ENCODE measurements at regions of chr11 and their contacts with region 1.

Region 1: GRCh38 chr11:43779306-43779705 is 98.8 kb downstream of the HSD17B12 start:
- DNase-seq: no peak
- ATAC-seq: no peak
- H3K4me3 ChIP-seq: no peak overlapping the region
- H3K27ac ChIP-seq: no peak overlapping the region
- H3K4me1 ChIP-seq: no peaks in the 10 kb centered on the region
- H3K27me3 ChIP-seq: no peaks in the 10 kb centered on the region
- CTCF ChIP-seq: no peak

Region 2: GRCh38 chr11:43680521-43681400 is 98.5 kb before region 1 on chr11 and contains the start of gene HSD17B12:
- intact Hi-C with region 1: loop called in 1 of 2 experiments (anchors 10 kb)
- DNase-seq: peak; percentile 95 to 100 (median 99)
- ATAC-seq: peak; percentile 99
- H3K4me3 ChIP-seq: peak within 1 kb of the TSS; percentile 84 to 88
- H3K27ac ChIP-seq: peak within 1 kb of the TSS; percentile 95 to 96
- H3K4me1 ChIP-seq: peaks cover 5 to 54% of the 10 kb centered on the region in 2 donors
- H3K27me3 ChIP-seq: no peaks in the 10 kb centered on the region
- CTCF ChIP-seq: no peak
- polyA plus RNA-seq, gene HSD17B12: 64.5 to 84.5 (median 73.9) TPM

Region 3: GRCh38 chr11:44731685-44732430 is 952.6 kb after region 1 on chr11:
- intact Hi-C with region 1: no loop called
- DNase-seq: no peak
- ATAC-seq: no peak
- H3K4me3 ChIP-seq: no peak overlapping the region
- H3K27ac ChIP-seq: peak overlapping the region in 1 of 2 donors; percentile 28
- H3K4me1 ChIP-seq: peaks cover 0 to 15% of the 10 kb centered on the region in 2 donors
- H3K27me3 ChIP-seq: peaks cover 6 to 43% of the 10 kb centered on the region in 2 donors
- CTCF ChIP-seq: no peak